Natural killer cell (primary cell): ENCODE measurements at regions of chr2 and their contacts with region 1.

Region 1: DNA sequence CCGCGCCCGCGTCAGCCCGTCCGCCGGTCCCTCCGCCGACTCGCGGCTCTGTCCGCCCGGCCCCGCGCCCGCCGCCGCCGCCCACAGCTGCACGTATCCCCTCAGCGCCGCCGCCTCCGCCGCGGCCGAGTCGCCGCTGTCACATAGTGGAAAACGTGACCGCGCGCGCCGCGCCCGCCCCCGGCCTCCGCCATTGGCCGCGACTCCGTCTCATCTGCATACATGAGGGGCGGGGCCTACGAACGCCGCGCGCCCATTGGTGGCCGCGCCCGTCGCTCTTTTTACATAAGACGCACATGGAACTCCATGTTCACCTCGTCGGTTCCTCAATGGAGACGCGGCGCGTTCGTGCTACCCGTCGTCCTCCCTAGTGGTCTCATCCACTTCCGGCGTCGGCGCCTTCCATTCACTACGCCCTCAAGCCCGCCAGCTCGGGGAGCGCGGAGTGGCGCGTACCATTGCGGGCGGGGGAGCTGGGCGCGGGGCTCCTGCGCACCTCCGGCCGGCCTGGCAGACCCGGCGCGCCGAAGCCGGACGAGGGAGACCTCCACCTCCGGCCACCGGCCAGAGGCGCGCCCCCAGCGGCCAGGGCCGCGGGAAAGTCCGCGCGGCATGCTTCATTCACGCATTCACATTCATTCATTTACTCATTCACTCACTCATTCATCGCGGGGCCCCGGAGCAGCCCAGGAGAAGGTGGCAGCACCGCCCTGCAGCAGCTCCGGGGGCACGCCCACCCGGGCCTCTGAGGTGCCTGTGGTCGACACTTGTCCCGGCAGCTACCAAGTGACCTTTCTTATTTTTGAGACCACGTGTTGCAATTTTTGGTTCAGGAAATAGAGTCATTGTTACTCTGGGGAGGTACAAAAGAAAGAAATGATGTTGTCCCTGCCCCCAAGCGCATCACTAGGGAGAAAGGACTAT is 502 bp upstream of the PER2 start:
- DNase-seq: peak; percentile 98 to 99
- ATAC-seq: peak; percentile 73 to 91 (median 83)
- H3K4me3 ChIP-seq: peak overlapping the region; percentile 45
- H3K4me3 Mint-ChIP-seq: peak overlapping the region; percentile 99
- H3K27ac ChIP-seq: peak overlapping the region; percentile 86
- H3K27ac Mint-ChIP-seq: peak overlapping the region; percentile 98 to 99
- H3K4me1 ChIP-seq: peaks cover 35% of the 10 kb centered on the region
- H3K4me1 Mint-ChIP-seq: peaks cover 41 to 46% of the 10 kb centered on the region in 2 donors
- H3K27me3 ChIP-seq: no peaks in the 10 kb centered on the region
- H3K27me3 Mint-ChIP-seq: no peaks in the 10 kb centered on the region
- CTCF ChIP-seq: no peak

Region 2: DNA sequence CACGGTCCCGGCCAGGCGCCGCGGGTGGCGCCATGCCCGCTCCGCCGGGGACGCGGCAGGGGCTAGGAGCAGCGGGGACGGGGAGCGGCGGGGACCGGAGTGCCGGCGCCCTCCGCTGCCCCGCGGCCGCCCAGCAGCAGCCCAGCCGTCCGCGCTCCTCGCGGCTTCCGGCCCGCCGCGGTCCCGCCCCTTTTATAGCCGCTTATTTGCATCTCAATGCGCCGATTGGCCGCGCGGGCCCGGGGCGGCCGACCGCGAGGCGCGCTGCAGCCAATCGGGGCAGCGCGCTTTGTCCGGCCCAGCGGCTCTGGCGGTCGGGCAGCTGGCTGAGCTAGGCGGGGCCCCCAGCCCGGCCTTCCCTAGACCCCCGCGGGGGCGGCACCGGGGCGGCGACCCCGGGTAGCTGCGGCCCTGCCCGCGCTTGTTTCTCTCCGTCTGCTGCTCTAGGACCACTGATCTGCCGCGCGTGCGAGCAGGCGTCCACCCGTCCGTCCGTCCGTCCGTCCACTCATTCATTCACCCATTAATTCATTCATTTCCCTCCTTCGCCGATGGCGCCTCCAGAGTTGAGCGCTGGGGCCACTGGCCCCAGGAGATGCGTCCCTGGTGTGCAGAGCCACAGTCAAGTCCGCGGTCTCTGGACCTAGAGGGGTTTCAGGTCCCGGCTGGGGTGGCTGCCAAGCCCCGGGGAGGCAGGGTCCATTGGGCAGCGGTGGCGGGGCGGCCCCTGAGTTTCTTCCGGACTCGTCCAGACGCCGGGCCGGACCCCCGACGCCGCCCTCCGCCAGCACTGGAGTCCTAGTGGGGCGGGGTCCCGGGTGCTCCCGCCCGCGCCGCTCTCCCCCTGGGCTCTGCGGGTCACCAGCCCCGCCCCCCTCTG is 48.8 kb before region 1 on chr2 and contains the start of gene HES6:
- intact Hi-C with region 1: loop called (anchors 5 kb)
- DNase-seq: peak; percentile 83 to 86
- ATAC-seq: peak; percentile 85 to 90 (median 85)
- H3K4me3 ChIP-seq: peak within 1 kb of the TSS; percentile 47
- H3K4me3 Mint-ChIP-seq: peak within 1 kb of the TSS; percentile 89
- H3K27ac ChIP-seq: no peak within 1 kb of the TSS
- H3K27ac Mint-ChIP-seq: peak within 1 kb of the TSS; percentile 35 to 71
- H3K4me1 ChIP-seq: peaks cover 22% of the 10 kb centered on the region
- H3K4me1 Mint-ChIP-seq: peaks cover 0 to 16% of the 10 kb centered on the region in 2 donors
- H3K27me3 ChIP-seq: peaks cover 20% of the 10 kb centered on the region
- H3K27me3 Mint-ChIP-seq: peaks cover 0 to 14% of the 10 kb centered on the region in 2 donors
- CTCF ChIP-seq: no peak
- total RNA-seq, gene HES6: 11.3 to 15.4 (median 13.5) TPM

Region 3: DNA sequence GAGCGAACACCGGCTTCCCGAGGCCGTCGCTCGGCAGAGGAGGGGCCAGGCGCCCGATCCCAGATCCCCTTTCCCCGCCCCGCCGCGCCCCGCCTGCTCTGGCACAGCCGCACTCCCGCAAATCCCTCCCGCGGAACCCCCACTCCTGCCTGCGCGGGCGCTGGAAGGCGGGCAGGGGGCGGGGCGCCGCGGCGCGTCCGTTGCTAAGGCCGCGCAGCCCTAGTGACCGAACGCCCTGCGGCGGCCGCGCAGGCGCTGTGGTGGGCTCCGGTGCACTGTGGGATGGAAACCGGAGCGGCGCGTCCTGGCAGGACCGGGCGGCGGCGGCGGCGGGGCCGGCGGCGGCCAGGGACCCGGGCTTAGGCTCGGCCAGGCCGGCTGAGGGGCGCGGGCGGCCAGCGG is 31.3 kb after region 1 on chr2 and contains the start of gene TRAF3IP1:
- intact Hi-C with region 1: loop called (anchors 1 kb)
- DNase-seq: peak; percentile 85 to 93
- ATAC-seq: peak; percentile 94 to 97 (median 96)
- H3K4me3 ChIP-seq: peak within 1 kb of the TSS; percentile 45
- H3K4me3 Mint-ChIP-seq: peak within 1 kb of the TSS; percentile 81
- H3K27ac ChIP-seq: no peak within 1 kb of the TSS
- H3K27ac Mint-ChIP-seq: peak within 1 kb of the TSS in 1 of 2 donors; percentile 67
- H3K4me1 ChIP-seq: peaks cover 18% of the 10 kb centered on the region
- H3K4me1 Mint-ChIP-seq: peaks cover 10% of the 10 kb centered on the region in 2 donors
- H3K27me3 ChIP-seq: no peaks in the 10 kb centered on the region
- H3K27me3 Mint-ChIP-seq: peaks cover 8 to 12% of the 10 kb centered on the region in 2 donors
- CTCF ChIP-seq: no peak
- total RNA-seq, gene TRAF3IP1: 9.7 to 11.9 (median 11.3) TPM

Region 4: GRCh38 chr2:238426568-238427434 is 137.9 kb after region 1 on chr2 and contains the start of gene ASB1:
- intact Hi-C with region 1: loop called (anchors 2 kb)
- DNase-seq: peak; percentile 83 to 86
- ATAC-seq: peak; percentile 82 to 88 (median 85)
- H3K4me3 ChIP-seq: peak within 1 kb of the TSS; percentile 55
- H3K4me3 Mint-ChIP-seq: peak within 1 kb of the TSS; percentile 89
- H3K27ac ChIP-seq: peak within 1 kb of the TSS; percentile 92
- H3K27ac Mint-ChIP-seq: peak within 1 kb of the TSS; percentile 90 to 91
- H3K4me1 ChIP-seq: peaks cover 28% of the 10 kb centered on the region
- H3K4me1 Mint-ChIP-seq: peaks cover 42 to 55% of the 10 kb centered on the region in 2 donors
- H3K27me3 ChIP-seq: no peaks in the 10 kb centered on the region
- H3K27me3 Mint-ChIP-seq: no peaks in the 10 kb centered on the region
- CTCF ChIP-seq: no peak
- total RNA-seq, gene ASB1: 38.3 to 47.5 (median 38.9) TPM